Ascending aorta (tissue), 2 donors: ENCODE measurements at regions of chr4 and their contacts with region 1.

Region 1: DNA sequence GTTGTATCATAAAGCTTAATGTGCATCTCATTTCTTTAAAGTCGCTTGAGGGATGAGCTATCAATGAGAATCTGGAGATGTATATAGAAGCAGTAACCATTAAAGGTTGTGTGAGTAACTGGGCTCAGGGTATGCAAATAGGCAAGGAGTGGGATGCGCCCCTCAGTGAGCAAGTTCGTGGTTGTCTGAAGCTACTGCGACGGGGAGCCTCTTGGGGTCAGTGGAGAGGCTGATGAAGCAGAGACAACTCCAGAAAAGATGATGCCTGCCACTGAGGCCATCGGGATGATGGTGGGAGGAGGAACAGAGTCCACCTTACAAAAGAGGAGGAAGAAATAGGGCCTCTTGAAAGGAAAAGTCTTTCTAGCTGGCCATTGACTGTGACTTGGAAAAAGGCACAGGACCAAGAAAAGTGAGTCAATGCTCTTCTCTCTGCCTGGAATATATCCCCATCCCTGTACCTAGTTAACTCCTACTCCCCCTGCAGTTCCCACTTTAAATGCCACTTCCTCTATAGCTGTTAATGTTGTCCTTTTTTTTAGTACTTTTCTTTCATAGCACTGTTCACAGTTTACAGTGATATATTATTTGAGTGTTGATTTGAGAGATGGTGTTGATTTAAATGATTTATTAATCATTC is 51.4 kb upstream of the LSM6 start:
- DNase-seq: no peak
- H3K4me3 ChIP-seq: no peak overlapping the region
- H3K27ac ChIP-seq: no peak overlapping the region
- H3K4me1 ChIP-seq: no peaks in the 10 kb centered on the region
- H3K27me3 ChIP-seq: no peaks in the 10 kb centered on the region
- CTCF ChIP-seq: no peak

Region 2: DNA sequence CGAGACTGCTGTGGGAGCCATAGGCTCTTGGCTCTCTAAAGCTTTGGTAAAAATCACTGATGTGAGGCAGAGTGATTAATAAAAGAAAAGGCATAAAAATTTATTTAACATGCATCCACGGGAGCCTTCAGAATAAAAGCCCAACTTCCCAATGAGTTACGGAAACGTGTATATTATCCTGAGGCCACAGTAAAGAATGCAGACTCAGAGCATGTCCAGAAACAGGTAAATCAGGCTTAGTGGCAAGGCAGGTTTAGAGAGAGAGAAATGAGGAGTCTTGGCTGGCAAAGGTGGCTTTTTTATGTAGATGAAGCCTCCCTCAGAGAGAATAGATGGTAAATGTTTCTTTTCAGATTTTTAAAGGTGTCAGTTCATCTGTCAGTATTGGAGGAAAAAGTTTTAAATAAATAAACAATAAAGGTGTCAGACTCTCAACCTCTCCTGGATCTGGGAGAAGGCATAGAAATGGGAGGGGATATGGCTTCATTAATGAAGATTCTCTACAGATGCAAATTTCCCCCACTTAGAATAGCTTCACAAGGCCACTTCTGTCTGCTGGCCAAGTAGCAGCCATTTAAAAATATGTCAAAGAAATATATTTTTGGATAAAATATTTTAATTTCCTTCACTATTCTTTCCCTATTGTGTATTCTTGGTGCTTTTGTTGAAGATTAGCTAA is 420.2 kb before region 1 on chr4:
- intact Hi-C with region 1: no loop called
- DNase-seq: no peak
- H3K4me3 ChIP-seq: no peak overlapping the region
- H3K27ac ChIP-seq: no peak overlapping the region
- H3K4me1 ChIP-seq: no peaks in the 10 kb centered on the region
- H3K27me3 ChIP-seq: no peaks in the 10 kb centered on the region
- CTCF ChIP-seq: no peak

Region 3: GRCh38 chr4:146018247-146018646 is 105.9 kb before region 1 on chr4:
- intact Hi-C with region 1: loop called (anchors 10 kb)
- DNase-seq: no peak
- H3K4me3 ChIP-seq: no peak overlapping the region
- H3K27ac ChIP-seq: no peak overlapping the region
- H3K4me1 ChIP-seq: no peaks in the 10 kb centered on the region
- H3K27me3 ChIP-seq: no peaks in the 10 kb centered on the region
- CTCF ChIP-seq: no peak

Region 4: DNA sequence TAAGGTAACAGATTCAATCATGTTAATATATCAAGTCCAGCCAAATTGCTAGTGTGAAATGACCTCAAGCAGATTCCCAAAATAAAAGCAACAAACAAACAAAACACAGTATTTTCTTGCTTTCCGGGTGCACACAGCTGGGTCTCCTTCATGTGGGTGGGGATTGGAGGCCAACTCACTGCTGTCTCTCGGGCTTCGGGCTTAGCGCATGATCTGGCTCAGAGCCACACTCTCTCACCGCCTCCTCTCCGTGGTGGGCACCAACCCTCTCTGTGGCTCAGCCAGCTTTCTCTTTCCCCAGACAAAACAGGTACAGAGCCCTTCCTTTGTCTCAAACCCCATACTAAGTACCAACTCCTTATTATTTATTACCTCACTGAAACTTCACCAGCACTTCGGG is 87.3 kb after region 1 on chr4:
- intact Hi-C with region 1: no loop called
- DNase-seq: no peak
- H3K4me3 ChIP-seq: no peak overlapping the region
- H3K27ac ChIP-seq: no peak overlapping the region
- H3K4me1 ChIP-seq: no peaks in the 10 kb centered on the region
- H3K27me3 ChIP-seq: no peaks in the 10 kb centered on the region
- CTCF ChIP-seq: no peak